Heart left ventricle (tissue), 16 donors: ENCODE measurements at regions of chr19 and their contacts with region 1.

Region 1: GRCh38 chr19:43934985-43935708 is at the start of gene ZNF45:
- DNase-seq: peak; percentile 91 to 94 (median 92)
- ATAC-seq: peak; percentile 97 to 99 (median 99)
- H3K4me3 ChIP-seq: peak within 1 kb of the TSS; percentile 49 to 77 (median 66)
- H3K27ac ChIP-seq: peak within 1 kb of the TSS; percentile 71 to 93 (median 88)
- H3K4me1 ChIP-seq: peaks cover 0 to 21% (median 12%) of the 10 kb centered on the region in 12 donors
- H3K27me3 ChIP-seq: no peaks in the 10 kb centered on the region
- CTCF ChIP-seq: no peak
- POLR2A ChIP-seq: peak in 1 of 2 donors; percentile 56
- total RNA-seq, gene ZNF45: 4.0 to 9.9 (median 7.2) TPM

Region 2: DNA sequence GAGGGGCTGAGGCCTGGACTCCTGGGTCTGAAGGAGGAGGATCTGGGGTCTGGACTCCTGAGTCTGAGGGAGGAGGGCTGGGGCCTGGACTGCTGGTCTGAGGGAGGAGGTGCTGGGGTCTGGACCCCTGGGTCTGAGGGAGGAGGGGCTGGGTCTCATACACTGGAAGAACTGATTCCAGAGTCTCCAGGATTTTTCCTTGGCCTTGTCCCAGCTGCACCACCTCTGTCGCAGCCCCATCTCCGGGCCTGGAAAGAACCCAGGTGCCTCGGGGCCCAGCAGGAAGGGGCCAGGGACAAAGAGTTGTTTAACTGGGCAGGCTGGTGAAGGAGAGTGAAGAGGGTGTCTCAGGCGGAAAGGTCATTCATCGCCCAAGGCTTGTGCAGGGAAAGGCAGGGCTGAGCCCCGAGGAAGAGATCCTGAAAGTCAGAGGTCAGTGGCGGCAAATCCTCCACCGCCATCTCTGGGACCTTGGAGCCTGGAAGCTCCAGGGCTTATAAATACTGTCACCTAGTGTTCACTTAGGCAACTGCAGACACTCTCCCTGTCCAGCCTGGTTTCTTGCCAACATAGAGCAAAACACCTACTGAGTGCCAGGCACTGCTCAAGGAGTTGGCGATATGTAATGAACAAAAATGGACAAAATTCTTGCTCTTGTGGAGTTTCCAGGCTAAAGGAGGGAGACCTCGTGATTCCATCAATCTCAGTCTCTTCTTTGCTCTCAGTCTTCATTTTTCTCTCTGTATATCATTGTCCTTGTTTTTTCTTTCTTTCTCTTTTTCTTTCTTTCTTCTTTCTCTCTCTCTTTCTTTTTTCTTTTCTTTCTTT is 150.0 kb before region 1 on chr19:
- intact Hi-C with region 1: no loop called
- DNase-seq: peak in 4 of 5 donors; percentile 45 to 56 (median 51)
- ATAC-seq: peak; percentile 33 to 86 (median 81)
- H3K4me3 ChIP-seq: peak overlapping the region in 1 of 12 donors; percentile 15
- H3K27ac ChIP-seq: peak overlapping the region in 1 of 12 donors; percentile 58
- H3K4me1 ChIP-seq: peaks cover 0 to 21% (median 2%) of the 10 kb centered on the region in 12 donors
- H3K27me3 ChIP-seq: peaks cover 0 to 22% (median 0%) of the 10 kb centered on the region in 9 donors
- CTCF ChIP-seq: peak; percentile 91 to 99 (median 98)
- POLR2A ChIP-seq: no peak

Region 3: DNA sequence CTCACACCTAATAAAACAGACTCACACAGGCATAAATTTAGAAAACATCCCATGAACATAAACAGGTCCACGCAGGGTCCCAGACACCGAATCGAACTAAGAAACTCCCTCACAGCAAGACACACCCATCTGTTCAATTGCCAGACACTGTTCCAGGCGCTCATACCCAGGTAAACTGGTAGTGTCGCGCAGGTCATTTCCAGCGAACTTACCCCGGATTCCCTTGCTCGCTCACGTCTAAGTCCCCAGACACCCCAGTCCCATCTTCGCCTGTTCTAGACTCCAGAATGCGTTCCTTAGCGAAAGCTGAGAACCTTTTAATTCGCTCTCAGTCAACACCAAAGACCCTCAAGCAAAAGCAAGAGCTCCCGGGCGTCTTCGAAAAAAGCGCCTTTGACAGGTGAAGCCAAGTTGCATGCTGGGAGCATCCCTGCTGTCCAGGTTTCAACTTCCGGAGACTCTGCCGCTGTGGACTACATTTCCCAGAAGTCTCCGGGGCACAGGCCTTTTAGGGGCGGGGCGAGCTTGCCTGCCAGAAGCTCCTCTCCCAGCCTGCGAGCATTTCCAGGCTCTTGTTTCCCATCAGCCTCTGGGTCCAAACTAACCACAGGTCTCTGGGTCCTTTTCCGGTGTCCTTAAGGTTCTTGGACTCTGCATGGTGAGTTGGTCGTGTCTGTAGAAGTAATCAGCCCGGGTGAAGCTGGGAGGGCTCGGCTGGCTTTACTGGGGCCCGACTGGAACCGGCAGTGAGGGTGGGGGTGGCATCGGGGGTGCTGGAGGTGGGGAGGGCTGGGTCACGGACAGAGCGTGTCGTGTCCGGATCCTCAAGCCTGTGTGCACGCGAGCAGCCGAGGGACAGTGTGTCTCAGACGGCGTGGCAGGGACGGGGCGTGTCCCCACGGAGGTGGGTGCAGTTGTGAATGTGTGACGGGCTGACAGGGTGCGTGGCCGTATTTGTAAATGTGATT is 108.1 kb before region 1 on chr19 and contains the start of gene ZNF283:
- intact Hi-C with region 1: loop called in 2 of 10 experiments (anchors 10 kb)
- DNase-seq: peak; percentile 89 to 95 (median 91)
- ATAC-seq: peak; percentile 99 to 100 (median 100)
- H3K4me3 ChIP-seq: peak within 1 kb of the TSS; percentile 32 to 78 (median 70)
- H3K27ac ChIP-seq: peak within 1 kb of the TSS in 11 of 12 donors; percentile 0 to 83 (median 72)
- H3K4me1 ChIP-seq: peaks cover 0 to 14% (median 7%) of the 10 kb centered on the region in 12 donors
- H3K27me3 ChIP-seq: peaks cover 0 to 3% (median 0%) of the 10 kb centered on the region in 9 donors
- CTCF ChIP-seq: no peak
- POLR2A ChIP-seq: peak in 1 of 2 donors; percentile 21
- total RNA-seq, gene ZNF283: 4.6 to 13.4 (median 11.9) TPM

Region 4: GRCh38 chr19:43839139-43839538 is 96.0 kb before region 1 on chr19:
- intact Hi-C with region 1: loop called in 1 of 10 experiments (anchors 10 kb)
- DNase-seq: no peak
- ATAC-seq: no peak
- H3K4me3 ChIP-seq: no peak overlapping the region
- H3K27ac ChIP-seq: no peak overlapping the region
- H3K4me1 ChIP-seq: no peaks in the 10 kb centered on the region
- H3K27me3 ChIP-seq: no peaks in the 10 kb centered on the region
- CTCF ChIP-seq: no peak
- POLR2A ChIP-seq: no peak

Region 5: GRCh38 chr19:43901395-43902390 is 33.5 kb before region 1 on chr19:
- intact Hi-C with region 1: loop called in 1 of 10 experiments (anchors 5 kb)
- DNase-seq: peak; percentile 88 to 91 (median 89)
- ATAC-seq: peak; percentile 98 to 100 (median 100)
- H3K4me3 ChIP-seq: peak overlapping the region; percentile 45 to 82 (median 64)
- H3K27ac ChIP-seq: peak overlapping the region in 9 of 12 donors; percentile 38 to 66 (median 55)
- H3K4me1 ChIP-seq: peaks cover 0 to 21% (median 8%) of the 10 kb centered on the region in 12 donors
- H3K27me3 ChIP-seq: no peaks in the 10 kb centered on the region
- CTCF ChIP-seq: no peak
- POLR2A ChIP-seq: no peak

Region 6: GRCh38 chr19:43950834-43951645 is 15.9 kb after region 1 on chr19 and contains the start of gene ZNF221:
- intact Hi-C with region 1: loop called in 2 of 10 experiments (anchors 1 to 2 kb)
- DNase-seq: peak; percentile 91 to 95 (median 93)
- ATAC-seq: peak; percentile 98 to 100 (median 100)
- H3K4me3 ChIP-seq: peak within 1 kb of the TSS; percentile 57 to 95 (median 78)
- H3K27ac ChIP-seq: peak within 1 kb of the TSS; percentile 18 to 85 (median 75)
- H3K4me1 ChIP-seq: peaks cover 0 to 5% (median 0%) of the 10 kb centered on the region in 12 donors
- H3K27me3 ChIP-seq: no peaks in the 10 kb centered on the region
- CTCF ChIP-seq: peak; percentile 19 to 75 (median 44)
- POLR2A ChIP-seq: no peak
- total RNA-seq, gene ZNF221: 2.6 to 6.7 (median 3.9) TPM

Region 7: DNA sequence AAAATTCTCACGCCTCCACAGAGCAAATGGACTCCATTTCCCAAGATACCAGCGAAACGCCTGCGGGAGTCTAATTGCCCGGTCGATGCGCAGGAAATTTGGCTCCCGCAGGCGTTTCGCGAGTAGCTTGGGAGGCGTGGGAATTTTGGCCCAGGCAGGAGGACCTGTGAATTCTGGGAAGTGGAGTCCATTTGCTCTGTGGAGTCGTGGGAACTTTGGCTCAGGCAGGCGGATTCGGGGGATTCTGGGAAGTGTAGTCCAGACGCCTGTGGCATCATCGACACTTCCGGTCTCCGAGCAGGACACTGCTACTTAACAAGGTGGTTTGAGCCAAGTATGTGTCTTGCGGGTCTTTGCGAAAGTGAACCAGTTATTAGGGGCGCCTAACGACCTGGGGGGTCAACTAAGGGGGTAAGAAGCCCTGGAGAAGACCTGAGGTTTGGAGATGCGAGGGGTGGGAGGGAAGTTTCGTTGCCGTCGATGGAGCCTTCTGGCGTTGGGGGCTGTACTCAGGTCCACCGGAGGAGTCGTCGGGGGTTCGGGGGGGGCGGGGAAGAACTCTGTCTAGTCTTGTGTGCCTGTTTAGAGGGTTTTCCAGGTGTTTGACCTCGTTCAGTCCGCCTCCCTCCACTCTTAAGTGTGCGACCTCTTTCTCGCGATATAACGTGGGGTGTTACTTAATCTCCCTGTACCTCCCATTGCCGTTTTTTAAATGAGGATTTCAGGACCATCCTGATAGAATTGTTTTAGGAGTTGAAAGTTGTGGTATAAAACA is 49.0 kb after region 1 on chr19 and contains the start of gene ZNF155:
- intact Hi-C with region 1: loop called in 2 of 10 experiments (anchors 2 kb)
- DNase-seq: peak; percentile 92 to 97 (median 96)
- ATAC-seq: peak; percentile 99 to 100 (median 100)
- H3K4me3 ChIP-seq: peak within 1 kb of the TSS; percentile 51 to 89 (median 72)
- H3K27ac ChIP-seq: peak within 1 kb of the TSS in 11 of 12 donors; percentile 63 to 91 (median 76)
- H3K4me1 ChIP-seq: peaks cover 0 to 15% (median 7%) of the 10 kb centered on the region in 12 donors
- H3K27me3 ChIP-seq: no peaks in the 10 kb centered on the region
- CTCF ChIP-seq: no peak
- POLR2A ChIP-seq: no peak
- total RNA-seq, gene ZNF155: 4.0 to 7.7 (median 6.6) TPM

Region 8: DNA sequence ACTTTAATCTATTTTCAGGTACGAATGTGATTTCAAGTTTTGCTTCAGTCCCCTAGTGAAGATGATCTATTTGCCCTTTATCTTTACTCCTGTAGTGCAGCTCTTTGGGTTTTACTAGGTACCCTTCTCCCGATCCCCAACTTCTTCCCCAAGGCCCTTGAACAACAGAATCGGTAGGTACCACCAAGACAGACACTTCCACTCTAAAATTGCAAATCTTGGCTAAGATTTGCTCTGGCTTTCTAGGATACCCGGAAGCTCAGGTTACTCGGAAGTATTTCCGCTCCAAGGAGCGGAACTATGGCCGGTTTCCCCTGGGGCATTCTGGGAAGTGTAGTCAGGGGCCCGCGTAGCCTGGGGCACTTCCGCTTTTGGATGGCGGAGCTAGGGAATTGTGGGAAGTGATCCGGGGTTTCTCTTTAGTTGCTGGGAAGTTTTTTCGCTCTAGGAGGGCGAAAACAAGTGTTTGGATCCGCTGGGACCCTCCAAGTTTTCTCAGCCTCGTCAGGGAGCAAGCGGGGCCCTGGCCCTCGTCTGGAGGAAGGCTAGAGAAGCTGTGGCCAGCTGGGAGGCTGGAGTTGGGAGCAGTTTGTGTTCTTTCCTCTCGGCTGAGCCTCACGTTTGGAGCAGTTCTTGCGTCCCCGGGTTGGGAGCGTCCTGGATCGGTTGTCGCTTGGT is 272.1 kb after region 1 on chr19:
- intact Hi-C with region 1: no loop called
- DNase-seq: peak; percentile 91 to 94 (median 93)
- ATAC-seq: peak; percentile 96 to 98 (median 97)
- H3K4me3 ChIP-seq: peak overlapping the region; percentile 47 to 86 (median 76)
- H3K27ac ChIP-seq: peak overlapping the region; percentile 84 to 96 (median 92)
- H3K4me1 ChIP-seq: peaks cover 0 to 15% (median 7%) of the 10 kb centered on the region in 12 donors
- H3K27me3 ChIP-seq: peaks cover 0 to 5% (median 0%) of the 10 kb centered on the region in 9 donors
- CTCF ChIP-seq: no peak
- POLR2A ChIP-seq: peak in 1 of 2 donors; percentile 47